Lower leg skin (tissue), 4 donors: ENCODE measurements at regions of chr1 and their contacts with region 1.

Region 1: GRCh38 chr1:201254625-201255506 is 28.4 kb upstream of the PKP1 start:
- DNase-seq: peak; percentile 58 to 94
- H3K4me3 ChIP-seq: no peak overlapping the region
- CTCF ChIP-seq: peak in 1 of 3 donors; percentile 88
- POLR2A ChIP-seq: no peak

Region 2: DNA sequence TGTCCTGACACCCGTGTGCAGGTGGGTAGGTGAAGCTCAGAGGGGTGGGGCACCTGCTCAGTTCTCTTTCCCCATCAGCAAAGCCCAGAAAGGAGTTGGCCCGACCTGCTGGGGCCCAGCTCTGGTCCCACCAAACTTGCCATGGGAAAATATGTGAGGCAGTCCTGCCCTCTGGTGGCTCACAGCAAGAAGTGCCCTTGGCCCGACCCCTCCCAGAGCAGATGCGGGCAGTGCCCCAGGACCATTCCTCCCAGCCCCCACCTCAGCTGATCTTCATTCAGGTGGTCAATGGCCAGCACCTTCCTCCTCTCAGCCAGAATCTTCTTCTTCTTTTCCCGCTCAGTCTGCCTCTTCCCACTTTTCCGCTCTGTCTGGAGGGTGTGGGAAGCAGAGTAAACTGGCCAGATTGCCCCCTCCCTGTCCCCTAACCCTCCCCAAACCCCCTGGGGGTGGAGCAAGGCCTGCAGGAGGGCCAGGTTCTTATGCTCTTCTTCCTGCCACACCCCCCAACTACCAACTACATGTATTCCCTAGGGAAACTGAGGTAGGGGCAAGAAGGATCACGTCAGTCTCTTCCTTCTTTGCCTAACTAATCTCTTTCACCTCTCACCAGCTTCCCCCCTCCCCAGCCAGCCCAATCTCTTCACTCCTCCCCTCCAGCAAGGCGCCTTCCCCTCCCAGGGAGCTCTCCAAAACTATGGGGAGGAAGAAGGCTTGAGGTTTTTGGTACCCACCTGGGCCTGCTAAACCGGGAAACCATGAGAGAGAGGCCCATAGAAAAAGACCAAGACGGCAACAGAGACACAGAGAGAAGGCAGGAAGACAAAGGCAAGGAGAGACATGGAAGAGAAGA is 107.0 kb after region 1 on chr1:
- intact Hi-C with region 1: loop called (anchors 5 kb)
- DNase-seq: no peak
- H3K4me3 ChIP-seq: no peak overlapping the region
- CTCF ChIP-seq: peak in 1 of 3 donors; percentile 29
- POLR2A ChIP-seq: no peak

Region 3: DNA sequence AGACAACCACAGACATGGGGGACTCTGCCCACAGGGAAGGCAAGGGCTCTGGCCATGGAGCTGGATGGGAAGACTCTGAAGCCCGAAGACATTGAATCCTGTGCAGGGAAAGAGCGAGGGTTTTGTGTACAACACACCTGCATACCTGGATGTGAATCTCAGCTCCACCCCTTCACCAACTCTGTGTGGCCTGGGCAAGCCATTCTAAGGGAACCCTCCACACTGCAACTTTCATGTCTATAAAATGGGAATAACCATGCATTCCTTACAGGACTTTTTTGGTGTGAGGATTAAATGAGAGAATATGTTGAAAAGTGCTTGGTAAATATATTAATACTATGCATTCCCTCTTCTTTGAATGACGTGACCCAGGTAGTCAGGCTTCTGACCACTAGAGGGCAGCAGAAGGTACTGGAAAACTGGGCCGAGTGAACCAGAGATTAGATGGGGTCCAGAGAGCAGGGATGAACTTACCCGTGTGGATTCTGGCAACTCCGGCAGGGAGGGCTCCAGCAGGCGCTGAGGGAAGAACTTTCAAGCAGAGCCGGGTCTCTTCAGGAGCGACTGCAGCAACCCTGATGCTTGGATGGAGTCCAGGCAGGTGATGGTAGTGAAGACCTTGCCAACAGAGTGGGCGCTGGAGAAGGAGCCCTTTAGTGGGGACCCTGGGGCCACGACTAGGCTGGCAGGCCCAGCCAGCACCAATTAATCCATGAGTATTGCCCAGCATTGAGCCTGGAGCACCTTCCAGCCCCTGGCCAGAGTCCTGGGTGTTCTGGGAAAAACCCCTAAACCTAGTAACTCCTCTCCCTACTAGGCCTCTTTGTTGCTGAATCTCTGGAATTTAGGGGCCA is 754.7 kb after region 1 on chr1:
- intact Hi-C with region 1: no loop called
- DNase-seq: peak in 1 of 2 donors; percentile 71
- H3K4me3 ChIP-seq: no peak overlapping the region
- CTCF ChIP-seq: peak in 1 of 3 donors; percentile 82
- POLR2A ChIP-seq: no peak